B cell (primary cell): ENCODE measurements at regions of chr20 and their contacts with region 1.

Region 1: DNA sequence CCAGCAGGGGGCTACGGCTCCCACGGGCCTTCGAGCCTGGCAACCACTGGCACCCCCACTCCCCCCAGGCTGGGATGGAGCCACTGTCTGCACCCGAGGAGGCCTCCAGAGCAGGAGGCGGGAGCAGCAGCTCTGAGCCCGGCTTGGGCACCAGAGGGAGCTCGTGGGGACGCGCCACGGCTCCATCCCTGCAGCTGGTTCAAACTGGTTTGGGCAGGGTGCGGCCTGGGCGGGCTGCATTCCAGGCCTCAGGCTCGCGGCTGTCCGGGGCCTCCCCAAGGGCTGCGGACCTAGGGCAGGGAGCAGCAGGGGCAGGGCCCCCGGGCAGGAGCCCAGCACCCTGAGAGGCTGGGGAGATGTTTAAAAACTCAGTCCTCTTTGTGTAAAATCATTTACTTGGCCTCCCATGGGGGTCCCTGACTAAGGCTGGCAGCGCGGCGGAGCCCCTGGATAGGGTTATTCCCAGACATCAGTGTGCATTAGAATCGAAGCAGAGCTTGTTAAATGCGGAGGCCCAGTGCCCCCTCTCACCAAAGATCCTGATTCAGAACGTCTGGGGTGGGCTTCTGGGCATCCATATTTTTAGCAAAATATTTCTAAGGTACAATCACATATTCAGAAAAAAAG is 4.1 kb upstream of the BCAS4 start:
- DNase-seq: peak; percentile 85
- ATAC-seq: peak; percentile 58
- H3K4me3 ChIP-seq: peak overlapping the region in 4 of 5 experiments; percentile 13 to 36 (median 26)
- H3K4me3 Mint-ChIP-seq: no peak overlapping the region
- H3K27ac ChIP-seq: peak overlapping the region; percentile 81 to 92
- H3K27ac Mint-ChIP-seq: peak overlapping the region; percentile 86
- H3K4me1 ChIP-seq: peaks cover 16 to 26% of the 10 kb centered on the region in 2 donors
- H3K4me1 Mint-ChIP-seq: peaks cover 20% of the 10 kb centered on the region
- H3K27me3 ChIP-seq: no peaks in the 10 kb centered on the region
- H3K27me3 Mint-ChIP-seq: no peaks in the 10 kb centered on the region
- CTCF ChIP-seq: peak; percentile 76

Region 2: DNA sequence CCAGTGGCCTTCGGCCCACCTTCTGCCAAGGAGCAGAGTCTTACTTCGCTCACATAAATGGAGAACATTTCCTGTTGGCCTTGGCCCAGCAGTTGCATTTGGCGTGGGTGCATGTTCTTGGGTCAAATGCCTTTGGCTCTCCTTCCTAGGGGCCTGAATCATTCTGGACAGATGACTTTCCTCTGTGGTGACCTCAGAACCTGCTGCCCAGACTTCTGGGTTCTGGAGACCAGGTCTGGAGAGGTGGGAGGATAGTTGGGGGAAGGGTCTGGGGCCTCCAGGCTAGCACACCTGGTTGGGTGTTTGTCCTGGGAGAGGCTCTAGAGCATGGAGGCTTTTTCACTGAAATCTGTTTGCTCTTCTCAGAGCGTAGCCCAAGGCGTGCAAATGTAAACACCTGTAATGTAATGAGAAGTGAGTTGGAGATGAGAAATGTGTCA is 33.4 kb after region 1 on chr20:
- CTCF ChIA-PET with region 1: interaction called, 340 read pairs
- POLR2A ChIA-PET with region 1: interaction called, 54 read pairs
- intact Hi-C with region 1: no loop called
- DNase-seq: no peak
- ATAC-seq: no peak
- H3K4me3 ChIP-seq: no peak overlapping the region
- H3K4me3 Mint-ChIP-seq: no peak overlapping the region
- H3K27ac ChIP-seq: no peak overlapping the region
- H3K27ac Mint-ChIP-seq: peak overlapping the region; percentile 50
- H3K4me1 ChIP-seq: peaks cover 37 to 38% of the 10 kb centered on the region in 2 donors
- H3K4me1 Mint-ChIP-seq: peaks cover 51% of the 10 kb centered on the region
- H3K27me3 ChIP-seq: no peaks in the 10 kb centered on the region
- H3K27me3 Mint-ChIP-seq: no peaks in the 10 kb centered on the region
- CTCF ChIP-seq: no peak

Region 3: GRCh38 chr20:50885781-50886486 is 95.2 kb after region 1 on chr20:
- CTCF ChIA-PET with region 1: interaction called, 25 read pairs
- POLR2A ChIA-PET with region 1: interaction called, 10 read pairs
- intact Hi-C with region 1: no loop called
- DNase-seq: no peak
- ATAC-seq: no peak
- H3K4me3 ChIP-seq: no peak overlapping the region
- H3K4me3 Mint-ChIP-seq: no peak overlapping the region
- H3K27ac ChIP-seq: no peak overlapping the region
- H3K27ac Mint-ChIP-seq: peak overlapping the region; percentile 20
- H3K4me1 ChIP-seq: no peaks in the 10 kb centered on the region
- H3K4me1 Mint-ChIP-seq: no peaks in the 10 kb centered on the region
- H3K27me3 ChIP-seq: no peaks in the 10 kb centered on the region
- H3K27me3 Mint-ChIP-seq: no peaks in the 10 kb centered on the region
- CTCF ChIP-seq: no peak

Region 4: DNA sequence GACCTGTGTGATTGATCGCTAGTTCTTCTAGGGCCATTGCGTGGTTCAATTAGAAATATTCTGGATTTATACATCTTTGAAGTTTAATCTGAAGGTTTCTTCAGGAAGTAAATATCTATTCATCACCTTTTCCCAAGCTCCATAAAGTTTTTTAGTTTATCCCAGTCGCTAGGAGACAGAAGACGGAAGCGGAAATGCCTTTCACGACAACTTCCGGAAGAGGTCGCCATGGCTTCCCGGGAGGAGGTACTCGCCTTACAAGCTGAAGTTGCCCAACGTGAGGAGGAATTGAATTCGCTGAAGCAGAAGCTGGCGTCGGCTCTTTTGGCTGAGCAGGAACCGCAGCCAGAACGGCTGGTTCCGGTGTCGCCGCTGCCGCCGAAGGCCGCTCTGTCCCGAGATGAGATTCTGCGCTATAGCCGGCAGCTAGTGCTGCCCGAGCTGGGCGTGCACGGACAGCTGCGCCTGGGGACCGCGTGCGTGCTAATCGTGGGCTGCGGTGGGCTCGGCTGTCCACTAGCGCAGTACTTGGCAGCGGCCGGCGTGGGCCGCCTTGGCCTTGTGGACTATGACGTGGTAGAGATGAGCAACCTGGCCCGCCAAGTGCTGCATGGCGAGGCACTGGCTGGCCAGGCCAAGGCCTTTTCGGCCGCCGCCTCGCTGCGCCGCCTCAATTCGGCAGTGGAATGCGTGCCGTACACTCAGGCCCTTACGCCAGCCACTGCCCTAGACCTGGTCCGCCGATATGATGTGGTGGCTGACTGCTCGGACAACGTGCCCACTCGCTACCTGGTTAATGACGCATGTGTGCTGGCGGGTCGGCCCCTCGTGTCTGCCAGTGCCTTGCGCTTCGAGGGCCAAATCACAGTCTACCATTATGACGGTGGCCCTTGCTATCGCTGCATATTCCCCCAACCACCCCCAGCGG is 168.1 kb after region 1 on chr20 and contains the start of gene MOCS3:
- CTCF ChIA-PET with region 1: interaction called, 36 read pairs
- POLR2A ChIA-PET with region 1: interaction called, 10 read pairs
- intact Hi-C with region 1: loop called (anchors 1 kb)
- DNase-seq: peak; percentile 95
- ATAC-seq: peak; percentile 80
- H3K4me3 ChIP-seq: peak within 1 kb of the TSS; percentile 78 to 99 (median 86)
- H3K4me3 Mint-ChIP-seq: peak within 1 kb of the TSS; percentile 98
- H3K27ac ChIP-seq: peak within 1 kb of the TSS; percentile 81 to 99
- H3K27ac Mint-ChIP-seq: peak within 1 kb of the TSS; percentile 99
- H3K4me1 ChIP-seq: peaks cover 24 to 26% of the 10 kb centered on the region in 2 donors
- H3K4me1 Mint-ChIP-seq: peaks cover 40% of the 10 kb centered on the region
- H3K27me3 ChIP-seq: no peaks in the 10 kb centered on the region
- H3K27me3 Mint-ChIP-seq: no peaks in the 10 kb centered on the region
- CTCF ChIP-seq: no peak
- total RNA-seq, gene MOCS3: 7.6 and 7.9 TPM in 2 replicates

Region 5: DNA sequence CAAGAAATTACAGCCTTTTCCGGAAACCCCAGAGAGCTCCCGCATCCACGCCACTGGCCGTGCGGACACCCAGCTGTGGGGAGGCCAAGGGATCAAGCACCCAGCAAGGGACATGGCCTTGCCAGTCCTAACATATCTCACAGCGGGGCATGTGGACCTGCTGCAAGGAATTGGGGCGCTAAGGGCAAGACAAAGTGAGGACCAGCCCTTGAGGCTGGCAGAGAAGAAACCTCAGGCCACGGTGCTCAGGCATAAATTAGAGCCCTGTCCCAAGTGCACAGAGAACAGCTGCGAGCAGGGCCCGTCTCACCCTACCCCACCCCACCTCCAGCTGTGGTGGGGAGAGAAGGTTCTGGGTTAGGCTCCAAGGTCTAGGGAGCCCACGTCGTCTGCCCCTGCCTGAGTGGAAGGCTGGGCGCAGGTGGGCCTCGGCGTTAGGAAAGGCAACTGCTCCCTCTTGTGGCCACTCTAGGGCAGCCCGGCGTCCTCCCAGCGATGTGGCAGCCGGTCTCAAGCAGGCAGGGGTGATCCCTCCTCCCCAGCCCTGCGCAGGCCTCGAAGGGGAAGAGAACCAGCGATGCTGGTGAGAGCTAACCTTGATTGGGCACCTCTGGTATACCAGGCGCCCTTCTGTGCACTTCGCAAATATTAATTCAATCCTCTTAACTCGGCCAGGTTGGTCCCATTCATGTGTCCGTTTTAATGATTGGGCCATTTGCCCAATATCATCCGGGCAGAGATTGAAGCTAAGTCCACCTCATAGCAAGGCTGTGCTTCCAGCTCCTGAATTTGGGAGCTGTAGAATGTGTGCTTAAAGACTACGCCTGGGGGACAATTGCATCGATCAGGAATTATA is 516.0 kb after region 1 on chr20:
- CTCF ChIA-PET with region 1: interaction called, 15 read pairs
- POLR2A ChIA-PET with region 1: no interaction called
- intact Hi-C with region 1: no loop called
- DNase-seq: peak; percentile 84
- ATAC-seq: peak; percentile 94
- H3K4me3 ChIP-seq: no peak overlapping the region
- H3K4me3 Mint-ChIP-seq: no peak overlapping the region
- H3K27ac ChIP-seq: no peak overlapping the region
- H3K27ac Mint-ChIP-seq: no peak overlapping the region
- H3K4me1 ChIP-seq: peaks cover 4 to 9% of the 10 kb centered on the region in 2 donors
- H3K4me1 Mint-ChIP-seq: peaks cover 6% of the 10 kb centered on the region
- H3K27me3 ChIP-seq: peaks cover 0 to 7% (median 0%) of the 10 kb centered on the region in 4 experiments
- H3K27me3 Mint-ChIP-seq: peaks cover 26% of the 10 kb centered on the region
- CTCF ChIP-seq: peak; percentile 87